ENCODE measurements at regions of chr11 and their contacts with region 1.

Region 1: DNA sequence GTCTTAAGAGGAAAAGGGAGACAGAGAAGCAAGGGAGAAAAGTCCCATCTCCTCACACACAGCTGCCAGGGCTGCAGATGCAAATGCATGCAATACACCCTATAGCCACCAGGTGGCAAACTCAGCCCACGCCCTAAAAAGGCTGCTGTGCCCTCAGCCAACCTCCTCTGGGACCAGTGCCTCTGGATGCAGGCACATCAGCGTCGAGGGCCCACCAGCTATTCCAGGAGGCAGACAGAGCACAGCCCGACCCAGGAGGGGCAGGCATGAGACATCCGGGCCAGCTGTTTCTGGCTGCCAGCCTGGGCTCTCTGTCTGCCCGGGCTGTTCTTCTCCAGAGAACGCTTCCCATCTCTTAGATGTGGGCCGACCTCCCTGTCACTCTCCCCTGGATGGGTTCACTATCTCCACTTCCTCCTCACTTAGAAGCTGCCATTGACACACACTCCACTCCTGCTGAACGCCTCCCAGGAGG is 39.7 kb downstream of the TPBGL start:
- DNase-seq: peak; percentile 65 to 81 (median 81)
- H3K4me3 ChIP-seq: no peak overlapping the region
- H3K27ac ChIP-seq: no peak overlapping the region
- H3K4me1 ChIP-seq: no peaks in the 10 kb centered on the region
- H3K27me3 ChIP-seq: no peaks in the 10 kb centered on the region
- CTCF ChIP-seq: peak; percentile 94 to 98 (median 95)
- EP300 ChIP-seq: no peak
- POLR2A ChIP-seq: no peak

Region 2: GRCh38 chr11:75328426-75329277 is 48.4 kb after region 1 on chr11:
- intact Hi-C with region 1: loop called in 1 of 4 experiments (anchors 5 kb)
- DNase-seq: peak; percentile 68 to 78 (median 72)
- H3K4me3 ChIP-seq: no peak overlapping the region
- H3K27ac ChIP-seq: no peak overlapping the region
- H3K4me1 ChIP-seq: peaks cover 8% of the 10 kb centered on the region
- H3K27me3 ChIP-seq: no peaks in the 10 kb centered on the region
- CTCF ChIP-seq: peak; percentile 13 to 72 (median 68)
- EP300 ChIP-seq: no peak
- POLR2A ChIP-seq: no peak

Region 3: DNA sequence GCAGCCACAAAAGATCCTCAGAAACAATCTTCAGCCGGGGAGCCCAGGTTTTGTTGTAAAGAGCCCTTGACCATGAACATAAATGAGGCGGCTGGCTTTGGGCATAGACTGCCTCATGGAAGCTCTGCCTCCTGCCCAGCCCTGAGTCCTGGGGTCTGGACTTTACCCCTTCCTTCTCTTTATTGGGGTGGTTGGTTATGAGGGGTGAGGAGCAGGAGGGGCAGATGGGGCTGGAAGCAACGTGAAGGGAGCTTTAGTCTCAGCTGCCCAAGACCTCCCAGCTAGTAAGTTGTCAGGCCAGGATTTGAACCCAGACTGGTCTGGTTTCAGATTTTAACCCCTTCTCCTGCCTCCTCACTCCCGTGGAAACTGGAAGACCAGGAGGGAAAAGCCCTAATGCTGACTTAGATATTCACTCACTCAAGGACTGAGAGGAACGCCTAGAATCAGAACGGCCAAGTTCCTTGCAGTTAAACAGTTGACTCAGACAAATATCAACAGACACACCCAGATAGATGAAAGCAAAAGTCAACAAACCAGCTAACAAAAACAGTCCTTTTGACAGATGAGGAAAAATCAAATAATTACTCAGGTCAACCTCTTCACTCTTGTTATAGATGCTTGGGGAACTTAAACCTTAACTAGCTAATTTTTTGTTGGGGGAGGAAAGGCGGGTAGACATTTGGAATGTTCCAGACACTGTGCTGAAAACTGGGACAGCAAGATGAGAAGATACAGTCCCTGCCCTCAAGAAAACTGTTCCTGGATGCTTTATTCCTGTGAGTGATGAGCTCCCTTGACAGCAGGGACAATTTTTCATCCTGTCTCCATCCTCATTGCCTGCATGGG is 91.9 kb after region 1 on chr11:
- intact Hi-C with region 1: loop called in 1 of 4 experiments (anchors 5 kb)
- DNase-seq: no peak
- H3K4me3 ChIP-seq: no peak overlapping the region
- H3K27ac ChIP-seq: no peak overlapping the region
- H3K4me1 ChIP-seq: no peaks in the 10 kb centered on the region
- H3K27me3 ChIP-seq: no peaks in the 10 kb centered on the region
- CTCF ChIP-seq: no peak
- EP300 ChIP-seq: no peak
- POLR2A ChIP-seq: no peak

Region 4: GRCh38 chr11:75388386-75389275 is 108.4 kb after region 1 on chr11:
- intact Hi-C with region 1: loop called in 3 of 4 experiments (anchors 1 to 2 kb)
- DNase-seq: peak; percentile 55 to 74 (median 72)
- H3K4me3 ChIP-seq: no peak overlapping the region
- H3K27ac ChIP-seq: no peak overlapping the region
- H3K4me1 ChIP-seq: no peaks in the 10 kb centered on the region
- H3K27me3 ChIP-seq: no peaks in the 10 kb centered on the region
- CTCF ChIP-seq: peak; percentile 61 to 72 (median 68)
- EP300 ChIP-seq: no peak
- POLR2A ChIP-seq: no peak

Measured in ovary (tissue), 10 donors.